OCI-LY7 (cell line): ENCODE measurements at regions of chr1 and their contacts with region 1.

Region 1: GRCh38 chr1:27357281-27358037 is 9.3 kb downstream of the MAP3K6 start:
- DNase-seq: peak; percentile 77
- H3K4me3 ChIP-seq: peak overlapping the region; percentile 65
- H3K27ac ChIP-seq: peak overlapping the region; percentile 25
- H3K4me1 ChIP-seq: peaks cover 26% of the 10 kb centered on the region
- CTCF ChIP-seq: peak; percentile 87

Region 2: DNA sequence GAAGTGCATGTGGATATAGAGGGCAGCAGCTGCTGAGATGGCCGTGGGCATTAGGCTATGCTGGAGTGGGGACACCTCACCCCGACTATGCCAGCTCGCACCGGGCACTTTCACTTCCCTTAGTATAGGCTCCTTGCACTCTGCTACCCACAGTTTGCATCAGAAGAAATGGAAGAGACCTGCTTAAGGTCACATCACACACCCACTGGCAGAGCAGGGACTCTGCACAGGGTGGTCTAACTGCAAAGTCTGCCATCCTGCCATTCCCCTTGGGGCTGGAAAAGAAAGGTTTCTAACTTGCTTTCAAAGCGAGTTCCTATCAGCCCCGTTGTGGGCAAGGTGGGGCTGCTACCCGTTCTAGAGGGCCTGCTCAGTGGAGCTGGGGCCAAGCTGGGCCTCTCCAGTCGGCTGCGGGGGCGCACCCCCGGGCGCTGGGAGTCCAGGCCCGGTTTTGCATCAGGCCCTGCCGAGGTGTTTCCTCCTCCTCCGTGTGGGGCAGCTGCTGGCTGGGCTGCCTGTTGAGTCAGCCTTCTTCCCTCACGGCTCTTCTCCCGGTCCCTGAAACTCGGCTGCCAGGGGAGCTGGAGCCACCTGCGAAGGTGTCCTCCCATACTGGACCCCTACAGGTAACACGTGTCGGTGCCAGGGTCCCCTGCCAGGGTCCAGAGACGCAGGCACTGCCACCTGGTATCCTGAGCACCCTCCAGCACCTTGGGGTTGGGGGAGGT is 15.8 kb before region 1 on chr1 and contains the start of gene SYTL1:
- CTCF ChIA-PET with region 1: interaction called, 3 read pairs
- POLR2A ChIA-PET with region 1: interaction called, 3 read pairs
- intact Hi-C with region 1: loop called (anchors 1 kb)
- DNase-seq: peak; percentile 90
- H3K4me3 ChIP-seq: peak within 1 kb of the TSS; percentile 81
- H3K27ac ChIP-seq: peak within 1 kb of the TSS; percentile 70
- H3K4me1 ChIP-seq: peaks cover 44% of the 10 kb centered on the region
- CTCF ChIP-seq: no peak; the same call in 1 of the 2 replicates
- total RNA-seq, gene SYTL1: 67.9 and 117 TPM in 2 replicates

Region 3: GRCh38 chr1:27405074-27405473 is 47.6 kb after region 1 on chr1:
- CTCF ChIA-PET with region 1: no interaction called
- POLR2A ChIA-PET with region 1: no interaction called
- intact Hi-C with region 1: no loop called
- DNase-seq: no peak
- H3K4me3 ChIP-seq: no peak overlapping the region
- H3K27ac ChIP-seq: peak overlapping the region; percentile 86
- H3K4me1 ChIP-seq: peaks cover 67% of the 10 kb centered on the region
- CTCF ChIP-seq: no peak